ENCODE measurements at regions of chr16 and their contacts with region 1.

Region 1: DNA sequence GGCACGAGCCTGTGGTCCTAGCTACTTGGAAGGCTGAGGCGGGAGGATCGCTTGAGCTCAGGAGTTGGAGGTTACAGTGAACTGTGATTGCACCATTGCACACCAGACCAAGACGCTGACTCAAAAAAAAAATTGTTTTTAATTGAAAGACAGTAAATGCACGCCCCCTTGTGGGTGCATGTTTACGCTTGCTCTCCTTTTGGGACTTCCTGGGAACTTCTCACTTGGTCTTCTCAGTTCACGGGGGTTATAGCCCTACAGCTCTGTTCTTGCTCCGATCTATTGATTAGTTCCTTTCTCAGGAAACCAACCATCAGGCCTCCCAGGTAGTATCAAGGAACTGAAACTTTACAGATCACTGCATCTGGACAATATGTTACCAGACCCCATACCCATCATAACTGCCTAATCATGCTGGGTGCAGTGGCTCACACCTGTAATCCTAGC is 14.2 kb upstream of the RIPOR1 start:
- DNase-seq: peak; percentile 91
- ATAC-seq: peak; percentile 91
- H3K4me3 Mint-ChIP-seq: no peak overlapping the region
- H3K27ac Mint-ChIP-seq: peak overlapping the region; percentile 55
- H3K4me1 Mint-ChIP-seq: peaks cover 8% of the 10 kb centered on the region
- H3K27me3 Mint-ChIP-seq: no peaks in the 10 kb centered on the region

Region 2: GRCh38 chr16:67499106-67499505 is 15.3 kb before region 1 on chr16:
- CTCF ChIA-PET with region 1: interaction called, 390 read pairs
- POLR2A ChIA-PET with region 1: interaction called, 3 read pairs
- intact Hi-C with region 1: loop called (anchors 1 kb)
- DNase-seq: no peak
- ATAC-seq: no peak
- H3K4me3 Mint-ChIP-seq: no peak overlapping the region
- H3K27ac Mint-ChIP-seq: no peak overlapping the region
- H3K4me1 Mint-ChIP-seq: peaks cover 9% of the 10 kb centered on the region
- H3K27me3 Mint-ChIP-seq: no peaks in the 10 kb centered on the region

Region 3: DNA sequence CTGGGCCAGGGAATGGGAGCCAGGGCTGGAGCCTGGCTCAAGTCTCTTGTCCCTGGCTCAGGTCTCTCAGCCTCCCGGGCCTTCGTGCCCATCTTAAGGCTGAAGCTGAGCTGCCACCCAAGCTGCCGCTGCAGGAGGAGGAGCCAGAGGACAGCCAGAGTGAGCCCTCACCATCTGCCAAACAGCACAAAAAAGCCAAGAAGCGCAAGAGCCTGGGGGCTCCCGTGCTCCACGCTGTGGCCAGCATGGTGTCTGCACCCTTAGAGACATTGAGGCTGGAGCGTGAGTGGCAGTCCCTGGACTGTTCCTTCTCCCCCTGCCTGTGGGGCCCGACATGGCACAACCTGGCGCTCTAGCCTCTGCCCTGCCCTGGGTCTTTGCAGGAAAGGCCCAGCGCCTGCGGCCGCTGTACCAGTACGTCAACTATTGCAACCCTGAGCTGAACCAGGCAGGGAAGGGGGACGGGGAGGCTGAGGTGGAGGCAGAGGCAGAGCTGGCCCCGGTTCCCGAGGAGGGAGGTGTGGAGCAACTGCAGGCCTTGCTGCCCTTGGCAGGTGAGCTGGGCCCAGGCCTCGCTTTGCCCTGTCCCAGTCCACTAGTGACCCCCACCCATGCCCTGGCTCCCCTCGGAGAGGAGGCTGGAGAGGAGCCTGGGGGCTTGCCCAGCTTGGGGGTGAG is 153.6 kb after region 1 on chr16:
- CTCF ChIA-PET with region 1: interaction called, 12 read pairs
- POLR2A ChIA-PET with region 1: no interaction called
- intact Hi-C with region 1: no loop called
- DNase-seq: peak; percentile 92
- ATAC-seq: peak; percentile 91
- H3K4me3 Mint-ChIP-seq: no peak overlapping the region
- H3K27ac Mint-ChIP-seq: no peak overlapping the region
- H3K4me1 Mint-ChIP-seq: peaks cover 19% of the 10 kb centered on the region
- H3K27me3 Mint-ChIP-seq: no peaks in the 10 kb centered on the region

Measured in activated CD4-positive, alpha-beta T cell treated with anti-CD3 and anti-CD28 coated beads for 36 hours (primary cell).